Ascending aorta (tissue), 2 donors: ENCODE measurements at regions of chr9 and their contacts with region 1.

Region 1: DNA sequence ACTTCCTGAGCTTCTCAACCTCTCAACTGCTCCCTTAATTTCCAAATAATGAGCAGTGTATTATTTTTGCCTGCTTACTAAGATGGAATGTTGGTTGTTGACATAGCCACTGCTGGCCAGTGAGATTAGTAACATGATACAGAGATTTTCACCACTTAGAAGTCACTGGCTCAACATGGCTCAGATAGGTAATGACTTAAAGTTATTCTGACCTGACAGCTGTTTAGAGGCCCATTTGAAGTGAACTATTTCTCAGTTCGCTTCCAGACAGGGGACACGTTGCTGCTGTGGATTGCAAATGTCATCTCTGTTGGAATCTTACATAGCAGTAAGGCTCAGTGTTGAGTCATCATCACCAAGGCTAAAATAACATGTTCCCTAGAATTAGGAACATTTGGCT is 490.2 kb downstream of the TLE4 start:
- DNase-seq: peak in 1 of 2 donors; percentile 74
- H3K4me3 ChIP-seq: no peak overlapping the region
- H3K27ac ChIP-seq: peak overlapping the region; percentile 82
- H3K4me1 ChIP-seq: peaks cover 6 to 22% of the 10 kb centered on the region in 2 donors
- H3K27me3 ChIP-seq: no peaks in the 10 kb centered on the region
- CTCF ChIP-seq: no peak

Region 2: GRCh38 chr9:79571309-79572031 is 490.5 kb before region 1 on chr9 and contains the start of gene TLE4:
- intact Hi-C with region 1: loop called (anchors 5 kb)
- DNase-seq: peak; percentile 100
- H3K4me3 ChIP-seq: peak within 1 kb of the TSS; percentile 96
- H3K27ac ChIP-seq: peak within 1 kb of the TSS; percentile 88 to 96
- H3K4me1 ChIP-seq: peaks cover 0 to 17% of the 10 kb centered on the region in 2 donors
- H3K27me3 ChIP-seq: no peaks in the 10 kb centered on the region
- CTCF ChIP-seq: no peak
- total RNA-seq, gene TLE4: 58.0 TPM

Region 3: DNA sequence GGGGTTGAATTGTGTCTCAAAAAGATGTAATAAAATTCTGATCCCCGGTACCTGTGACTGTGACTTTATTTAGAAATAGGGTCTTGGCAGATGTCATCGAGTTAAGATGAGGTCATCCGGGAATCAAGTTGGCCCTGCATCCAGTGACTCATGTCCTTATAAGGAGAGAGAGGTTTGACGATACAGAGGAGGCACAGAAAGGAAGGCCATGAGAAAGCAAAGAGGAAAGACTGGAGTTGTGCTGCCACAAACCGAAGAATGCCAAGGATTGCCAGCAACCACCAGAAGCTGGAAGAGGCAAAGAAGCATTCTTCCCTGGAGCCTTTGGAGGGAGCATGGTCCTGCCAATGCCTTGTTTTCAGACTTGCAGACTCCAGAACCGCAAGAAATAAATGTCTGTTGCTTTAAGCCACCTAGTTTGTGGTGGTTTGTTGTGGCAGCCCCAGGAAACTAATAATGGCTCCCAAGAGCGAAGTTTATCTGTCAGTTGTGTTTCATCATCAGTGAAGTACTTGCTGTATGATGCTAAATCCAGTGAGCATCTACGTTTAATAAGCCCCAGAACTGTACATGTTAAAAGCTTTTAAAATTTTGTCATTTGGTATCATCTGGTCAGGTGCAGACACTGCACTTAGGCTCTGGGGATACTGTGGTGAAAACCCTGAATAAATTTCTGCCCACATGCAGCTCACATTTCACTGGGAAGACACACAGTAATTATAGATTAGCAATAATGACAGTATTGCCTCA is 375.4 kb before region 1 on chr9:
- intact Hi-C with region 1: loop called (anchors 5 kb)
- DNase-seq: peak in 1 of 2 donors; percentile 78
- H3K4me3 ChIP-seq: peak overlapping the region in 1 of 2 donors; percentile 41
- H3K27ac ChIP-seq: peak overlapping the region; percentile 50 to 64
- H3K4me1 ChIP-seq: peaks cover 0 to 13% of the 10 kb centered on the region in 2 donors
- H3K27me3 ChIP-seq: no peaks in the 10 kb centered on the region
- CTCF ChIP-seq: no peak